ENCODE measurements at regions of chr3 and their contacts with region 1.

Region 1: GRCh38 chr3:157136647-157137387 is 23.1 kb downstream of the CCNL1 start:
- DNase-seq: peak; percentile 81
- H3K4me3 ChIP-seq: no peak overlapping the region
- H3K27ac ChIP-seq: peak overlapping the region; percentile 56
- H3K4me1 ChIP-seq: peaks cover 52% of the 10 kb centered on the region
- H3K27me3 ChIP-seq: no peaks in the 10 kb centered on the region
- CTCF ChIP-seq: no peak

Region 2: DNA sequence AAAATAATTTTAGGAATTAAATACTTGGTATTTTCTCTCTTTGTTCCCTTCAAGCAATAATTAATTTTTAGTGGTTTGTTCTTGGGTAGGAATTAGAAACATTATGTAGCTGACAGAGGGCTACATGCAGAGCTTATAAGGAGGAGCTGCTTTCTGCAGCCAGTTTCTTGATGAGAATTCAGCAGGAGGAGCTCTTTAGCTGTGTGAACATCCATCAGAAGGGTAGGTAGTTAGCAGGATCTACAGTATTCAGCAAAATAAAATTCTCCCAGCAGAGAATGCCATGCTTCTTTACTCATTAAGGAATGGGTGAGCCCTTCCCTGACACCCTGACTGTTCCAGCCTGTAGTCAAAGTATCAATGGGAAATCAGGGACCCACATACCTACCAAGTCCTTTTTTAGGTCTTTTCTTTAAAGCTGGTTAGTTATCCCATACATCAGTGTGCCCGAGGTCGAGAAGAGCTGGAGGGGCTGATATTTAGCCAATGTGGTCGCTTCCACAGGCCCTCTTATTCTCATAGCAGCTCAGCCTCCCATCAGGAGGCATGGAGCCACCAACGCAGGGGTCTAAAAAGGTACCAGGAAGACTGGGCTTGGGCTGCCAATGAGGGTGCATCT is 962.5 kb before region 1 on chr3:
- CTCF ChIA-PET with region 1: no interaction called
- dilution Hi-C with region 1: no loop called
- in situ Hi-C with region 1: loop called in 1 of 2 experiments (anchors 25 kb)
- intact Hi-C with region 1: loop called (anchors 5 kb)
- DNase-seq: peak; percentile 44
- H3K4me3 ChIP-seq: no peak overlapping the region
- H3K27ac ChIP-seq: no peak overlapping the region
- H3K4me1 ChIP-seq: peaks cover 7% of the 10 kb centered on the region
- H3K27me3 ChIP-seq: no peaks in the 10 kb centered on the region
- CTCF ChIP-seq: peak; percentile 26 to 70

Region 3: DNA sequence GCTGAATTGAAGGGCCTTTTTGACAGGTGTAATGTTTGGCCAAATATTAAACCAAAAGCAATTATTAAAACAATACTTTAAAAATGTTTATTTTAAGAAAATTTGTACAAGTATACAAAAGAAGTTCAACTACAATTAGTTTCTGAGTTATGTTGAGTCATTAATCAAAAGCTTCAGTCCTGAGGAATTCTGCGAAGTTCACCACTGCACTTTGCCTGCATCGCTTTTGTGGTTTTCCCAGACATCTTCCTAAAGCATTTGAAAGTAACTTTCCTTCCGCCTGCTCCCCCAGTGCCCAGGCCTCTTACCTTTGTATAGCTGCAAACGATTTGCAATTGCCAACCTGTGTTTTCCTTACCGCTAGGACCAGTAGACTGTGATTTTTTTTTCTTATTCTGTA is 946.9 kb before region 1 on chr3:
- CTCF ChIA-PET with region 1: interaction called, 10 read pairs
- dilution Hi-C with region 1: no loop called
- in situ Hi-C with region 1: no loop called
- intact Hi-C with region 1: no loop called
- DNase-seq: no peak
- H3K4me3 ChIP-seq: no peak overlapping the region
- H3K27ac ChIP-seq: no peak overlapping the region
- H3K4me1 ChIP-seq: no peaks in the 10 kb centered on the region
- H3K27me3 ChIP-seq: no peaks in the 10 kb centered on the region
- CTCF ChIP-seq: no peak

Region 4: GRCh38 chr3:156449712-156450574 is 686.9 kb before region 1 on chr3:
- CTCF ChIA-PET with region 1: no interaction called
- dilution Hi-C with region 1: no loop called
- in situ Hi-C with region 1: no loop called
- intact Hi-C with region 1: loop called (anchors 5 kb)
- DNase-seq: peak; percentile 28
- H3K4me3 ChIP-seq: no peak overlapping the region
- H3K27ac ChIP-seq: no peak overlapping the region
- H3K4me1 ChIP-seq: no peaks in the 10 kb centered on the region
- H3K27me3 ChIP-seq: peaks cover 3% of the 10 kb centered on the region
- CTCF ChIP-seq: peak; percentile 79 to 82

Region 5: DNA sequence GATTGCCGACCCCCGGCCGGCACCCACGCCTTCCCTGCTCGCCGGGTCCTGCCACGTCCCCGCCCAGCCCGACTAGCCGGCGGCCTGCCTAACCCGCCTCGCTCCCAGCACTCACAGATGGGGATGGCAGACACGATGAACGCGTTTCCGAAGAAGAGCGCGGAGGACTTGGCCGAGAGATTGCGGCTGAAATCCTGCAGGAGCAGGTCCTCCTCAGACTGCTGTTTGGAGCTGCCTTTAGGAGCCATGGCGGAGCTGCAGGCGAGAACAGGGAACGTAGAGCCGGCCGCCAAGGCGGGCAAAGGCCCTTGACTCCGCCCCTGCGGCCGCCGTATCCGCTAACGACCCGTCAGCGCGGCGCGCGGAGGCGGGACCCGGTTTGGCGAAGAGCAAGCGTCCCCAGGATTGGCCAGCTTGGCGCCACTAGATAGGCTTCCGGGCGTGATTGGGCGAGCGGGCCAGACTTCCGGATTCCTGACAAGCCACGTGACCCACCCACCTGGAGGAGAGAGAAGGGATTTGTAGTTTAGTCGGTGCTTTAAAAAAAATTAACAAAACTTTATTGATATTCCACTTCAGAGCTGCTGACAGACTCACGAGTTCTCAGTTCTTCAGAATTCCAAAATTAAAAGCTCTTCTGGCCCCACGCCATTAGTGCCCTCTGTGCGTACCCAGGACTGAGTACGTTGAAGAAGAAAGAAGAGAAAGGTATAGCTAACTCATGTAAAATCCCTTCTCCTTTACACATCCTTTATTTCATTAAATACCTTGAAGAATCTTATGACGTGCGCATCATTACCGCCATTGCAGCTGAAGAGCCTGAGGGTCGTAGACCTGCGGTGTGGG is 581.8 kb before region 1 on chr3 and contains the start of gene SSR3:
- CTCF ChIA-PET with region 1: no interaction called
- dilution Hi-C with region 1: no loop called
- in situ Hi-C with region 1: loop called in 1 of 2 experiments (anchors 10 kb)
- intact Hi-C with region 1: loop called (anchors 2 kb)
- DNase-seq: peak; percentile 99
- H3K4me3 ChIP-seq: peak within 1 kb of the TSS; percentile 97 to 99 (median 97)
- H3K27ac ChIP-seq: peak within 1 kb of the TSS; percentile 87
- H3K4me1 ChIP-seq: peaks cover 34% of the 10 kb centered on the region
- H3K27me3 ChIP-seq: no peaks in the 10 kb centered on the region
- CTCF ChIP-seq: peak in 1 of 2 donors; percentile 8
- total RNA-seq, gene SSR3: 375 to 388 TPM

Region 6: DNA sequence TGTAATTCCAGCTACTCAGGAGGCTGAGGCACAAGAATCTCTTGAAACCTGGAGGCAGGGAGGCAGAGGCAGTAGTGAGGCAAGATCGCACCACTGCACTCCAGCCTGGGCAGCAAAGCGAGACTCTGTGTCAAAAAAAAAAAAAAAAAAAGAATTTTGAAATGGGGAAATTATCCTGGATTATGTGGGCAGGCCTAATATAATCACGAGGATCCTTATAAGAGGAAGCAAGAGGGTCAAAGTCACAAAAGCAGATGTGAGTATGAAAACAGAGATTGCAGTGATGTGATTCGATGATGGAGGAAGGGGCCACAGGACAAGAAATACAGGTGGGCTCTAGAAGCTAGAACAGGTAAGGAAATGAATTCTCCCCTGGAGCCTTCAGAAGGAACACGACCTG is 151.1 kb before region 1 on chr3:
- CTCF ChIA-PET with region 1: no interaction called
- dilution Hi-C with region 1: no loop called
- in situ Hi-C with region 1: no loop called
- intact Hi-C with region 1: no loop called
- DNase-seq: no peak
- H3K4me3 ChIP-seq: no peak overlapping the region
- H3K27ac ChIP-seq: no peak overlapping the region
- H3K4me1 ChIP-seq: no peaks in the 10 kb centered on the region
- H3K27me3 ChIP-seq: no peaks in the 10 kb centered on the region
- CTCF ChIP-seq: no peak

Measured in mammary epithelial cell (primary cell).